Transverse colon (tissue), 4 donors: ENCODE measurements at regions of chr11 and their contacts with region 1.

Region 1: DNA sequence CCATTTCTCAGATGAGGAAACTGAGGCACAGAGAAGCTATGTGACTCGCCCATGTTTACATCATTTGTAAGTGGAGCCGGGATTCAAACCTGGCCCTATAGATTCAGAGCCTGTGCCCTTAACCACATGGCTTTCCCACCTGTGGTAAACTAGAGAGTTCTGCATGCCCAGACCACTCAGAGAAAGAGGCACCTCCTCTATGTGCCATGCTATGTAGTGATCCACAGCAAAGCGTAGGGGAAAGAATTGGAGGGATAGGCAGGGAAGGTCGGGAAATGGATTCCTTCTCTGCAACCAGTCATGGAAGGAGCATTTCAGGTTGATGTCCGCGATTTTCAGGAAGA is 15.4 kb upstream of the POU2AF2 start:
- DNase-seq: no peak
- H3K4me3 ChIP-seq: peak overlapping the region in 2 of 4 donors; percentile 27 to 61
- H3K27ac ChIP-seq: peak overlapping the region in 1 of 4 donors; percentile 68
- H3K4me1 ChIP-seq: peaks cover 0 to 12% (median 0%) of the 10 kb centered on the region in 4 donors
- H3K27me3 ChIP-seq: no peaks in the 10 kb centered on the region
- CTCF ChIP-seq: no peak
- EP300 ChIP-seq: no peak
- POLR2A ChIP-seq: no peak

Region 2: DNA sequence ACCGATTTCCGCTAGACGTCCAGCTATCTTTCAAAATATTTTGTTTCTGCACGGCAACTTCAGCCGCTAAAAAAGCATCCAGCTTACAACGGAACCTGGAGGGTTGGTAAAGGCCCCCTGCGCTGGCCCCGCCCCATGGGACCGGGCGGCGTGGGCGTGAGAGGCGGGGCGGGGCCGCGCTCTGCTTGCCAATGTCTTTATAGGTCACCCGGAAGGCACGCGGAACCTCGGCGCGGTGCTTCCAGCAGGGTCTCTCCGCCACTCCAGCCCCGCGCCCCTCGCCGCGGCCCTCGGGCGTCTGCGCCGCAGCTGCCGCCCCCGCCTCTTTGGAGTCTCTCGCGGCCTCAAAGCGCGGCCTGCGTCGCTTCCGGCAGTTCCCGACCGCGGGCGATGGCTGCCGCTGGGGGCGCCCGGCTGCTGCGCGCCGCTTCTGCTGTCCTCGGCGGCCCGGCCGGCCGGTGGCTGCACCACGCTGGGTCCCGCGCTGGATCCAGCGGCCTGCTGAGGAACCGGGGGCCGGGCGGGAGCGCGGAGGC is 800.3 kb before region 1 on chr11 and contains the start of gene FDX1:
- in situ Hi-C with region 1: loop called in 1 of 4 experiments (anchors 25 kb)
- intact Hi-C with region 1: no loop called
- DNase-seq: peak; percentile 84
- H3K4me3 ChIP-seq: peak within 1 kb of the TSS; percentile 65 to 96 (median 74)
- H3K27ac ChIP-seq: peak within 1 kb of the TSS; percentile 91 to 97 (median 94)
- H3K4me1 ChIP-seq: peaks cover 18 to 35% (median 29%) of the 10 kb centered on the region in 4 donors
- H3K27me3 ChIP-seq: no peaks in the 10 kb centered on the region
- CTCF ChIP-seq: peak; percentile 30 to 75 (median 63)
- EP300 ChIP-seq: no peak
- POLR2A ChIP-seq: peak; percentile 34
- total RNA-seq, gene FDX1: 25.4 to 28.9 (median 26.8) TPM